Esophagus squamous epithelium (tissue), 5 donors: ENCODE measurements at regions of chr1 and their contacts with region 1.

Region 1: GRCh38 chr1:19582302-19582701 is 61.8 kb upstream of the NBL1 start:
- DNase-seq: no peak
- H3K4me3 ChIP-seq: no peak overlapping the region
- H3K27ac ChIP-seq: no peak overlapping the region
- H3K4me1 ChIP-seq: no peaks in the 10 kb centered on the region
- H3K27me3 ChIP-seq: no peaks in the 10 kb centered on the region
- CTCF ChIP-seq: peak; percentile 59 to 83 (median 78)
- POLR2A ChIP-seq: no peak

Region 2: DNA sequence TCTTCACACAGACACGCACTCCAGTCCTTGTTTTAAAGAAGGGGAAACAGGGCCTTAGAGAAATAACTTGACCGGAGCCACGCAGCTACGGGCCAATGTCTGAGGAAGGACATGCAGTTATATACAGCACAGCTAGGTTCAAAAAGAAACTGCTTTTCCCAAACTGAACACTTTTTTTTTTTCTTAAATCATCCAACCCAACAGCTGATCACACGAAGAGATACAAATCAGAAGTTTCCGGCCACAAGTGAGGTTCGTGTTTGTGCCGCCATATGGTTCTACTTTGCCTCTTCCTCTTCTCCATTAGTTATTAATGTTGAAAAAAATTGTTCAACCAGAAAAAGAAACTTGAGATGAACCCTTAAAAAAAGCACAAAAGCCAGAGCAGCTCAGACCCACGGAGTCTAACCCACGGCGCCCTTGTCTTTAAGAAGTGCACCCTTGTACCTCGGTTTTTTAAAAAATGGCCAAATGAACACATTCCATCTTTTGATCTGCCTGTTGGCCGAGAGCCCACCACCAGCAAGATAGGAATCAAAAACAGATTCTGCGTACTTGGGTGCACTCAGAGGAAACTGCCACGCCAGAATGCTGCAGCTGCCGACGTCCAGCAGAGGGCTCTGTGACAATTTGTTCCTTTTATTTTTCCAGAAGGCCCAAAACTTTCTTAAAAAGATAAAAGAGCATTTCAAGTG is 191.3 kb before region 1 on chr1:
- intact Hi-C with region 1: loop called (anchors 10 kb)
- DNase-seq: no peak
- H3K4me3 ChIP-seq: peak overlapping the region in 2 of 4 donors; percentile 9 to 13
- H3K27ac ChIP-seq: peak overlapping the region; percentile 70 to 89 (median 86)
- H3K4me1 ChIP-seq: peaks cover 56 to 100% (median 69%) of the 10 kb centered on the region in 3 donors
- H3K27me3 ChIP-seq: no peaks in the 10 kb centered on the region
- CTCF ChIP-seq: peak; percentile 79 to 92 (median 85)
- POLR2A ChIP-seq: no peak

Region 3: DNA sequence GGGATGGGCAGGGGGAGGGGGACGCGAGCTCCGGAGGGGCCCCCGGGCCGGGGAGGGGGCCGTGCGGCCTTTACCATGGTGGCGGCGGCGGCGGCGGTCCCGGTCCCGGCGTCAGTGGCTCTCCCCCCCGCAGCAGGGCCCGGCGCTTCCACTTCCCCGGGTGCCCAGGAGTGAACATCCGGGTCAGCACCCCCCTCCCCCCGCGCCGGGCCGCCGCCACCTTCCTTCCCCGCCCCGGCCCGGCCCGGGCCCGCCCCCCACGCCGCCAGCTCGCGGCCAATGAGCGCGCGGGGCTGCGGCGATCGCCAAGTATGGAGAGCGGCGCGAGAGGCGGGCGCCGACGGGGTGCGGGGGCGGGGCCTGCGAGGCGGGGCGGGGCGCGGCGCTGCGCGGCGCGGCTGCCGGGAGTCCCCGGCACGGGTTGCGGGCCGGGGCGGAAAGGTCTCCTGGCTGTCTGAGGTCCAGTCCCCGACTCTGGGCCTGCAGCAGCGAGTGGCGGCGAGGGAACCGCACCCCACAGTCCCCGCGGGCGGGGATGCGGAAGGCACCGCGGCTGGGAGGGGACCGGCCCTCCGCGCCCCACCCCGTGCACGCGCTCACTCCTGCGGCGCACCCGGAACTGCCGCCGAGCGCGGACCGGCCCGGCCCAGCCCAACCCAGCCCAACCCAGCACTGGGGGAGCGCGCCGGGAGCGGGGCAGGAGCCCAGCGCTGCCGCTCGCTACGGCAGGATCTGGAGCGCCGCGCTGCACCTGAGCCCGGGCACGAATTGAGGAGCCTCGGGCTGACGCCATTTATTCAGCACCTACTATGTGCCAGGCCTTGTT is 96.7 kb before region 1 on chr1 and contains the start of gene CAPZB:
- intact Hi-C with region 1: no loop called
- DNase-seq: peak; percentile 63
- H3K4me3 ChIP-seq: peak within 1 kb of the TSS; percentile 89 to 100 (median 96)
- H3K27ac ChIP-seq: peak within 1 kb of the TSS; percentile 99 to 100 (median 100)
- H3K4me1 ChIP-seq: peaks cover 27 to 70% (median 49%) of the 10 kb centered on the region in 3 donors
- H3K27me3 ChIP-seq: no peaks in the 10 kb centered on the region
- CTCF ChIP-seq: no peak
- POLR2A ChIP-seq: peak in 3 of 4 donors; percentile 56 to 94 (median 90)
- total RNA-seq, gene CAPZB: 89.4 to 146 (median 126) TPM